ENCODE measurements at regions of chr14 and their contacts with region 1.

Region 1: GRCh38 chr14:52876311-52876710 is 74.5 kb downstream of the FERMT2 start:
- DNase-seq: no peak
- H3K4me3 ChIP-seq: no peak overlapping the region
- H3K27ac ChIP-seq: peak overlapping the region; percentile 52 to 72
- H3K4me1 ChIP-seq: peaks cover 0 to 38% of the 10 kb centered on the region in 2 donors
- H3K27me3 ChIP-seq: no peaks in the 10 kb centered on the region
- CTCF ChIP-seq: no peak

Region 2: GRCh38 chr14:52596861-52597260 is 279.4 kb before region 1 on chr14:
- intact Hi-C with region 1: no loop called
- DNase-seq: no peak
- H3K4me3 ChIP-seq: no peak overlapping the region
- H3K27ac ChIP-seq: no peak overlapping the region
- H3K4me1 ChIP-seq: no peaks in the 10 kb centered on the region
- H3K27me3 ChIP-seq: no peaks in the 10 kb centered on the region
- CTCF ChIP-seq: no peak

Region 3: DNA sequence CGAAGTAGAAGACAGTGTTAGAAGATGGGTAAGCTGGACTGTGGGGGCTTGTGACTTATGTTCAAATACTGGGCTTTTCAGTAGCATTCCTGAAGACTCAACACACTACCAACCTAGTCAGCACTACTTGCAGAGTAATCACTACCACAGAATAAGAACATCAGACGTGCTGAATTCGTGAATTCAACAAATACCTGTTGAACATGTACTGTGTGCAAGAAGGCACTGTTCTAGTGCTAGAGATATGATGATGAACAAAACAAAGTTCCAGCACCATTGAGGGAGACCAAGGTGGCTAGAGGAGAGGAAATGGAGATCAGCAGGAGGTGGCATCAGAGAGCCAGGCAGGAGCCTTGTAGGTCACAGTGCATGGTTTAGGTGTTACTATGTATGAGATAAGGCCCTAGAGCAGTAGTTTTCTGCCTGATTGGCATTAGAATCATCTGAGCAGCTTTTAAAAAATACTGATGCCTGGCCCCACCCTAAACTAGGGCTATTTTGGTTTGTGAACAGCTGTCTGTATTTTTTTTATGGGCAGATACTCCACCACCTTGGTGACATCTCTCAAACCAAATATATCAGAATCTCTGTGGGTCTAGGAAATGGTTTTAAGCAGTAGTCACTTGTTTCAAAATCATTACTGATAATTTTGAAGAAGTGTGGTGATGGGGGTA is 47.7 kb after region 1 on chr14:
- intact Hi-C with region 1: loop called (anchors 5 kb)
- DNase-seq: no peak
- H3K4me3 ChIP-seq: peak overlapping the region in 1 of 2 donors; percentile 5
- H3K27ac ChIP-seq: peak overlapping the region; percentile 82 to 87
- H3K4me1 ChIP-seq: peaks cover 12 to 76% of the 10 kb centered on the region in 2 donors
- H3K27me3 ChIP-seq: no peaks in the 10 kb centered on the region
- CTCF ChIP-seq: peak in 1 of 3 experiments; percentile 4

Region 4: GRCh38 chr14:52944254-52944653 is 67.9 kb after region 1 on chr14:
- intact Hi-C with region 1: no loop called
- DNase-seq: no peak
- H3K4me3 ChIP-seq: peak overlapping the region in 1 of 2 donors; percentile 26
- H3K27ac ChIP-seq: no peak overlapping the region
- H3K4me1 ChIP-seq: peaks cover 5 to 39% of the 10 kb centered on the region in 2 donors
- H3K27me3 ChIP-seq: no peaks in the 10 kb centered on the region
- CTCF ChIP-seq: no peak

Measured in ascending aorta (tissue), 2 donors.